Panc1 (cell line): ENCODE measurements at regions of chr16 and their contacts with region 1.

Region 1: GRCh38 chr16:74591876-74592614 is 14.9 kb downstream of the GLG1 start:
- DNase-seq: no peak
- ATAC-seq: no peak
- H3K4me3 ChIP-seq: no peak overlapping the region
- H3K27ac ChIP-seq: no peak overlapping the region
- H3K4me1 ChIP-seq: peaks cover 9% of the 10 kb centered on the region
- H3K27me3 ChIP-seq: no peaks in the 10 kb centered on the region
- CTCF ChIP-seq: no peak

Region 2: GRCh38 chr16:74563828-74564263 is 28.2 kb before region 1 on chr16:
- CTCF ChIA-PET with region 1: no interaction called
- POLR2A ChIA-PET with region 1: interaction called, 13 read pairs
- in situ Hi-C with region 1: no loop called
- intact Hi-C with region 1: no loop called
- DNase-seq: no peak
- ATAC-seq: no peak
- H3K4me3 ChIP-seq: no peak overlapping the region
- H3K27ac ChIP-seq: no peak overlapping the region
- H3K4me1 ChIP-seq: no peaks in the 10 kb centered on the region; the same call in 1 of the 2 replicates
- H3K27me3 ChIP-seq: no peaks in the 10 kb centered on the region
- CTCF ChIP-seq: no peak